Activated naive CD8-positive, alpha-beta T cell treated with anti-CD3 and anti-CD28 coated beads, Interleukin-2, amount 10 ng/mL, durations not matched to agents 7 days and 5 days (primary cell): ENCODE measurements at regions of chr10 and their contacts with region 1.

Region 1: DNA sequence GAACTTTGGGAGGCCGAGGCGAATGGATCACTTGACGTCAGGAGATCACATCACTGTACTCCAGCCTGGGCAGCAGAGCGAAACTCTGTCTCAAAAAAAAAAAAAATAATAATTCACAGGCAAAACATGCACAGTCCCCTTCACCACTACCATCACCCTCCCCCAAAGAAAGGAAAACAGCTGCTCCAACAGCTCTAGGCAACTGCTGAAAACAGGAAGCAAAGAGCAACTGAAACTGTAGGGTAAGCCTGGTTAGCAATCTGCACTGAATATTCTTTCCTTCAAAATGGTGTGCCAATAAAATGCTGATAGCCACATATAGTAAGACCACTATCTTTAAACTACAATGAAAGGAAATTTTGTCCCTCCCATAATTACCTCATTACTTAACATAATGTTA is 11.8 kb downstream of the NT5C2 start:
- DNase-seq: no peak
- ATAC-seq: peak; percentile 70
- H3K4me3 Mint-ChIP-seq: peak overlapping the region; percentile 35
- H3K27ac Mint-ChIP-seq: peak overlapping the region; percentile 18
- H3K4me1 Mint-ChIP-seq: peaks cover 31% of the 10 kb centered on the region
- H3K27me3 Mint-ChIP-seq: no peaks in the 10 kb centered on the region

Region 2: GRCh38 chr10:103192451-103193106 is 11.3 kb after region 1 on chr10:
- POLR2A ChIA-PET with region 1: interaction called, 11 read pairs
- DNase-seq: peak; percentile 76
- ATAC-seq: peak; percentile 62
- H3K4me3 Mint-ChIP-seq: peak overlapping the region; percentile 92
- H3K27ac Mint-ChIP-seq: peak overlapping the region; percentile 99
- H3K4me1 Mint-ChIP-seq: peaks cover 33% of the 10 kb centered on the region
- H3K27me3 Mint-ChIP-seq: peaks cover 5% of the 10 kb centered on the region

Region 3: GRCh38 chr10:103554488-103555324 is 373.5 kb after region 1 on chr10:
- POLR2A ChIA-PET with region 1: interaction called, 11 read pairs
- DNase-seq: no peak
- ATAC-seq: peak; percentile 46
- H3K4me3 Mint-ChIP-seq: peak overlapping the region; percentile 64
- H3K27ac Mint-ChIP-seq: no peak overlapping the region
- H3K4me1 Mint-ChIP-seq: peaks cover 19% of the 10 kb centered on the region
- H3K27me3 Mint-ChIP-seq: peaks cover 29% of the 10 kb centered on the region